H1 (cell line): ENCODE measurements at regions of chr5 and their contacts with region 1.

Region 1: DNA sequence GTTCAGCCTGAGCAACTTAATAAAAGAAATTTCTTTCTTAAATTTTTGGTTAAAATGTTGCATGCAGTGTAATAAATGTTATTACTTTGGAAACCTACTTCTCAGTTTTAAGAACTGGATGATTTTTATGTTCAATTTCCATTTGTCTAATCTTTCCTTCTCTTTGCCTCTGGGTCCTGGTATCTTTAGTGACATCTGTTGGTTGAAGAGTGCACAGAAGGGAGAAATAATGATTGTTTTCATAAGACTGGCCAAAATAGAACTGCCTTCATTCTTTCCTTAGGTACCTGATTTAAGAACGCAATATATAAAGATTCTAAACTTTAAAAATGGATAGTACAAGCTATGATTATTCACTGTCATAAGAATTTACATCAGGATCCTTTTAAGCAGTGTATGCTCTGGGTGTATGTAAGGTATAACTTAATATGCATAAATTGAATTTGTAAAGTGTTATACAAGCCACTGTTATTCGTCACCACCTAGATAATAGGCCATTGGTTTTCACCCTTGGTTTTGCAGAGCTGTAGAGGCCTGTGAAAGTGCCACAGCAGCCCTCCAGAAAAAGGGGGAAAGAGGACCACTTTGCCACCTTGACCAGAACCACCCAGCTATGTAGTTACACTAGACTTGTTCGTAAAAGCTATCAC is 82.8 kb upstream of the TLX3 start:
- DNase-seq: no peak
- H3K4me3 ChIP-seq: no peak overlapping the region
- H3K27ac ChIP-seq: no peak overlapping the region
- H3K4me1 ChIP-seq: peaks cover 0 to 5% (median 0%) of the 10 kb centered on the region in 4 experiments; a peak in 1 of 7 replicates
- H3K27me3 ChIP-seq: no peaks in the 10 kb centered on the region
- CTCF ChIP-seq: peak in 1 of 3 experiments; percentile 18; a peak in 1 of 4 replicates
- EP300 ChIP-seq: no peak
- POLR2A ChIP-seq: no peak
- RAD21 ChIP-seq: no peak

Region 2: GRCh38 chr5:170993476-170993875 is 232.8 kb before region 1 on chr5:
- CTCF ChIA-PET with region 1: no interaction called
- POLR2A ChIA-PET with region 1: no interaction called
- DNase-seq: no peak
- H3K4me3 ChIP-seq: no peak overlapping the region
- H3K27ac ChIP-seq: no peak overlapping the region
- H3K4me1 ChIP-seq: no peaks in the 10 kb centered on the region
- H3K27me3 ChIP-seq: no peaks in the 10 kb centered on the region
- CTCF ChIP-seq: no peak
- EP300 ChIP-seq: no peak
- POLR2A ChIP-seq: no peak
- RAD21 ChIP-seq: no peak

Region 3: DNA sequence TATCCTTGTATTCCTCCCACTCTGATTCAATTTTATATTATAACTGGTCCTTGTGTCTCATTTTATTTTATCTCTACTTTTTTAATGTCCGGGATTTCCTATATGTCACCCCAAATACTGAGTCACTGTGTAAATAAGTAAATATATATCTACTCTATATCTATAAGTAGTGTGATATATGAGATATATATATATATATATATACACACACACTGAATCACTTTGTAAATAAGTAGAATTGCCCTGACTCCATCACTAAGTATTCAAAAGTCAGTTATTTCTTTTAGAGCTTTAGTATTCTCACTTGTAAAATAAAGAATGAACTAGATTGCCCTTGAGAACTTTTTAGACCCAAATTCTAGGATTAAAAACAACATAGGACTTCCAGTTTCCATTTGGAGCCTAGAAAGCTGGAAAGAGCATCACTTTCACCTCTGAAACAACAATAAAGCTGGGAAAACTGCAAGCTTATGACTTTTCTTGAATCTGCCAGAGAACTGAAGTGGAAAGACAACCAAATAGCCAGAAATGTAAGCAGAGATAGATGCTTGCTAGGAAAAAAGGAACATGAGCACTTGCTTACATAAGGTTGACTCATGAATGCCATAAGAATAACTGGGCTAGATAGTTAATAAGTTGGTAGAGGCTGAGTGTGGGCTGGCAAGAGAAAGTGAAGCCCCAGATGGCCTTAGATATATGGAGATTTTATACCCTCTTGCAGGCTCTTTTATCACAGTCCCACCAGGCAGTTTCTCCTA is 88.3 kb before region 1 on chr5:
- CTCF ChIA-PET with region 1: no interaction called
- POLR2A ChIA-PET with region 1: no interaction called
- DNase-seq: no peak
- H3K4me3 ChIP-seq: no peak overlapping the region
- H3K27ac ChIP-seq: no peak overlapping the region
- H3K4me1 ChIP-seq: no peaks in the 10 kb centered on the region
- H3K27me3 ChIP-seq: no peaks in the 10 kb centered on the region
- CTCF ChIP-seq: no peak
- EP300 ChIP-seq: no peak
- POLR2A ChIP-seq: no peak
- RAD21 ChIP-seq: no peak

Region 4: DNA sequence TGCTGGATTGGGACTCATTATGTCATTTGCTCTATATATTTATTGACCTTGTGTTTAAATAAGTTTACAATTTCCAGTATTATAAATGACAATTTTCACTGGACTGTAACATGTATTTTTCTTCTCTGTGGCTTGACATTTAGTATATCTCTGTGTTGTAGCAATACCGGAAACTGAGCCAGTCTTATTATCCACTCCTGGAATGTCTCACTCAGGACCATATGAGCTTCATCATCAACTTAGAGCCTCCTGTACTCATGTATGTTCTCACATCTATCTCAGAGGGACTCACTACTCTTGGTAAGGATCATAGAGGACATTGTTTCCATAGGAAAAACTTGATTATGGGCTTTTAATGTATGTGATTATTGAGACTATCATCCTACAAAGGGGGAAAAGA is 16.3 kb after region 1 on chr5:
- CTCF ChIA-PET with region 1: interaction called, 10 read pairs
- POLR2A ChIA-PET with region 1: no interaction called
- DNase-seq: no peak
- H3K4me3 ChIP-seq: no peak overlapping the region
- H3K27ac ChIP-seq: no peak overlapping the region
- H3K4me1 ChIP-seq: no peaks in the 10 kb centered on the region
- H3K27me3 ChIP-seq: no peaks in the 10 kb centered on the region
- CTCF ChIP-seq: no peak
- EP300 ChIP-seq: no peak
- POLR2A ChIP-seq: no peak
- RAD21 ChIP-seq: no peak

Region 5: GRCh38 chr5:171295299-171295698 is 69.1 kb after region 1 on chr5:
- CTCF ChIA-PET with region 1: no interaction called
- POLR2A ChIA-PET with region 1: no interaction called
- DNase-seq: no peak
- H3K4me3 ChIP-seq: no peak overlapping the region
- H3K27ac ChIP-seq: no peak overlapping the region
- H3K4me1 ChIP-seq: peaks cover 0 to 2% (median 0%) of the 10 kb centered on the region in 4 experiments; a peak in 1 of 7 replicates
- H3K27me3 ChIP-seq: no peaks in the 10 kb centered on the region; a peak in 2 of 7 replicates
- CTCF ChIP-seq: no peak
- EP300 ChIP-seq: no peak
- POLR2A ChIP-seq: no peak
- RAD21 ChIP-seq: no peak

Region 6: GRCh38 chr5:171450423-171451331 is 224.4 kb after region 1 on chr5:
- CTCF ChIA-PET with region 1: no interaction called
- POLR2A ChIA-PET with region 1: no interaction called
- DNase-seq: peak in 1 of 2 experiments; percentile 69
- H3K4me3 ChIP-seq: peak overlapping the region; percentile 5 to 58 (median 28); a peak in 6 of 8 replicates
- H3K27ac ChIP-seq: no peak overlapping the region
- H3K4me1 ChIP-seq: peaks cover 14 to 25% (median 20%) of the 10 kb centered on the region in 4 experiments
- H3K27me3 ChIP-seq: peaks cover 0 to 8% (median 6%) of the 10 kb centered on the region in 4 experiments; a peak in 4 of 7 replicates
- CTCF ChIP-seq: no peak
- EP300 ChIP-seq: no peak
- POLR2A ChIP-seq: 0 out of 3 replicates have a peak, but pooled peaks of 1 of the 2 experiments have one; percentile 18
- RAD21 ChIP-seq: no peak